ENCODE measurements at regions of chr12 and their contacts with region 1.

Region 1: GRCh38 chr12:94875525-94875924 is 128.0 kb downstream of the NDUFA12 start:
- DNase-seq: peak; percentile 65
- ATAC-seq: peak; percentile 68
- H3K4me3 ChIP-seq: no peak overlapping the region
- H3K27ac ChIP-seq: no peak overlapping the region
- H3K4me1 ChIP-seq: peaks cover 19 to 26% of the 10 kb centered on the region in 2 experiments; a peak in 3 of 4 replicates
- H3K27me3 ChIP-seq: no peaks in the 10 kb centered on the region
- CTCF ChIP-seq: peak; percentile 38 to 74 (median 68)
- POLR2A ChIP-seq: no peak
- RAD21 ChIP-seq: peak; percentile 89

Region 2: DNA sequence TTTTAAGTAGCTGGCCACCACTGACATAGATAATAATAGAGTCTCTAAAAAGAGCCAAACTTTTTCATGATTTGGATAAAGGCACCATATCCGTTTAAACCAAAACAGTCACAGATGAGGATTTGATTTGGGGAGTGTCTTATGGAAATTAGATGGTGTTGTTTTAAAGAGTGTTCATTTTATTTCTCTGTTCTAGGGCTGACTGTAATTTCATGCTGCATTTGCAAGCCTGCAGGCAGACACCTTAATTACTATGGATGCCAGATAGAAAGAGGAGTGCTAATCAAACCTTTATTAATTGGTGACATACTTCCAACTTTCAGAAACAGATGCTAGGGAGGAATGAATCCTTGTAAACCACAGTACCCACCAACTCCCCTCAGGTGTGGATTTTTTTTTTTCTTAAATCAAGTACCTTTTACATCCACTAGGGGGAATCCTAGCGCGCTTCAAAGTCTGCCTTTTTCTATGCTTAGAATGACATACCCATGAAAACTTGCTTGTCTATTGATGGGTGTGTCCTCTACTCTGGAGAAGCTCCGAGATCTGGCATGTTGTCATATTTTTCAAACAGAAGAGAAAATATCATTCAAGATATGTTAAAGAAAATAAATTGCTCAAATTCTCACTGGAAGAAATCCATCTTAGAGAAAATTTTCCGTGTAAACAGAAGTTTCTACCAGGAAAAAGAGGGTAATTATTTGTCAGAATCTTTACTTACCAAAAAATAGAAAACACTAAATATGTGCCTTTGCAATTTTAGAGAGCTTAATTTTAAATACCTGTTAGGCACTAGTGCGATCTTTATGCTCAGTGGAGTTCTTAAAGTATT is 741.3 kb before region 1 on chr12:
- CTCF ChIA-PET with region 1: no interaction called
- POLR2A ChIA-PET with region 1: no interaction called
- RAD21 ChIA-PET with region 1: no interaction called
- intact Hi-C with region 1: loop called (anchors 10 kb)
- DNase-seq: peak; percentile 61
- ATAC-seq: peak; percentile 83
- H3K4me3 ChIP-seq: no peak overlapping the region
- H3K27ac ChIP-seq: no peak overlapping the region
- H3K4me1 ChIP-seq: peaks cover 0 to 2% of the 10 kb centered on the region in 2 experiments; a peak in 1 of 4 replicates
- H3K27me3 ChIP-seq: no peaks in the 10 kb centered on the region; the same call in 1 of the 2 replicates
- CTCF ChIP-seq: peak; percentile 67 to 76 (median 68); a peak in 5 of 6 replicates
- POLR2A ChIP-seq: no peak
- RAD21 ChIP-seq: peak; percentile 73

Region 3: DNA sequence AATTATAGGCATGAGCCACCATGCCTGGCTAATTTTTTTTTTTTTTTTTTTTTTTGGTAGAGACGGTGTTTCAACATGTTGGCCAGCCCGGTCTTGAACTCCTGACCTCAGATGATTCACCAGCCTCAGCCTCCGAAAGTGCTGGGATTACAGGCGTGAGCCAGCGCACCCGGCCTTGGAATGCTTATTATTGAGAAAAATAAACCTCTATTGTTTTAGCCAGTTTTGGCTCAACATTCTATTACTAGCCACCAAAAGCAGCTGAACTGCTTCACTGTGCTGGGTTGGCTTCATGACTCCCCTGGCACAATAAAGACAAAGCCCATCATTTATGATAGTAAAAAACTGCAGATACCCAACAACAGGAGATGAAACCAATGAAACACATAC is 322.4 kb before region 1 on chr12:
- CTCF ChIA-PET with region 1: interaction called, 15 read pairs
- POLR2A ChIA-PET with region 1: no interaction called
- RAD21 ChIA-PET with region 1: interaction called in 1 of 2 experiments, 3 read pairs
- intact Hi-C with region 1: no loop called
- DNase-seq: peak; percentile 51
- ATAC-seq: peak; percentile 81
- H3K4me3 ChIP-seq: peak overlapping the region in 1 of 2 experiments; percentile 23; a peak in 2 of 4 replicates
- H3K27ac ChIP-seq: peak overlapping the region; percentile 11; the same call in 1 of the 2 replicates
- H3K4me1 ChIP-seq: peaks cover 11 to 29% of the 10 kb centered on the region in 2 experiments
- H3K27me3 ChIP-seq: no peaks in the 10 kb centered on the region
- CTCF ChIP-seq: no peak
- POLR2A ChIP-seq: no peak
- RAD21 ChIP-seq: peak; percentile 15; the same call in 1 of the 2 replicates

Region 4: DNA sequence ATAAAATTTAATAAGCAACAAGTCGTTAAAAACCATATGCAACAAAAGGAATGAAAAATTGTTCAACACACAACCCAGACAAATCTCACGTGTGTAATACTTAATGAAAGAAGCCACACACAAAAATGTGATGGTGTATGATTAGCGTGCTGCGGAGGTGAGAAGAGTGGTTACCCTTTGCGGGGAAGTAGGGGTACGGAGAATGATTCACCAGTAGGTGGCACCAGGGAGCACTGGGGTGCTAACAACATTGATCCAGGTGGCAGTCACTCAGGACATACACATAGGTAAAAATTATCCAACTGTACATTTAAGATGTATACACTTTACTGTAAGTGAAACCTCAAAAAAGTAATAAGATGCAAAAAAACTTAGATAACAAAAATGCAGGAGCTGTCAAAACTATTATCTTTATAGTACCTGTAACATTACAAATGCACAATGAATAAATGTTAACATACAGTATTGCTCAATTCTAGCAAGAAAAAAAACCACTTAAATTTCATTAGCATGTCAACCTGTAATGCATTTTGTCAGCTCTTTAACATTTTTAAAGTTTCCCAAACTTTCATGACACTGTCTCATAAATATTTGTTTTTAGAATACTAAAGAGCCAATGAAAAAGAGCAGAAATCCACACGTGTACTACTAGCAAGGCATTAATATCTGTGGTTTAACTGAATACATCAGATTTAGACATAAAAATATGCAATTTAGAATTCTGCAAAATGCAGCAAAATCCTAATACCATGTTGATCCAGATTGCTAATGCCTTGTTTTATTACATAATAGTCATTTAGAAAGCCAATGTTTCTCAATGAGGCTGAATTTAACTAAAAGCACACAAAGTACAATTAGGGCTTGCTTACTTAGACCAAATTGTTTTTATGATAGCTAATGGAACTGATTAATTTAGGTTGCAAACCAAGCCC is 271.8 kb before region 1 on chr12:
- CTCF ChIA-PET with region 1: interaction called, 4 read pairs
- POLR2A ChIA-PET with region 1: interaction called, 5 read pairs
- RAD21 ChIA-PET with region 1: no interaction called
- intact Hi-C with region 1: loop called (anchors 1 kb)
- DNase-seq: peak; percentile 22
- ATAC-seq: peak; percentile 91
- H3K4me3 ChIP-seq: no peak overlapping the region
- H3K27ac ChIP-seq: no peak overlapping the region
- H3K4me1 ChIP-seq: peaks cover 0 to 11% of the 10 kb centered on the region in 2 experiments; a peak in 1 of 4 replicates
- H3K27me3 ChIP-seq: no peaks in the 10 kb centered on the region
- CTCF ChIP-seq: peak; percentile 71 to 88 (median 87)
- POLR2A ChIP-seq: no peak
- RAD21 ChIP-seq: peak; percentile 67

Region 5: DNA sequence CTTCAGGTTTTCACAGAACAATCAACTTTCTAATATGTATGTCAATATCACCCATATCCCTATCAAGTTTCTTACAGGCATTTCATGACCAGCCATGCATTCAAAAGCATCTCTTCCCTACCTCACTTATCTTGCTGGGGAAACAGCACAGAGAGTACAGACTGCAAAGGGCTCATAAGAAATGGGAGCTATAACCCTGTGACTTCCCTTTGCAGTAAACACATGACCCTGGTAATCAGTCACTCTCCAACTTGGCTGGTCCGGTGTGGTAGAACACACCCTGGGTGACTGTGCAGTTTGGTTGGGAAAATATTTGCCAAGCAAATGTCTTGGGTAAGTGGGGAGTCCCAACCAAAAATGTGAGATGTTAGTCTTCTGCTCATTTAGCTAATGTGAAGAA is 175.7 kb before region 1 on chr12:
- CTCF ChIA-PET with region 1: no interaction called
- POLR2A ChIA-PET with region 1: no interaction called
- RAD21 ChIA-PET with region 1: no interaction called
- intact Hi-C with region 1: no loop called
- DNase-seq: no peak
- ATAC-seq: no peak
- H3K4me3 ChIP-seq: no peak overlapping the region
- H3K27ac ChIP-seq: no peak overlapping the region
- H3K4me1 ChIP-seq: no peaks in the 10 kb centered on the region
- H3K27me3 ChIP-seq: no peaks in the 10 kb centered on the region
- CTCF ChIP-seq: no peak
- POLR2A ChIP-seq: no peak
- RAD21 ChIP-seq: no peak

Region 6: GRCh38 chr12:94710933-94711332 is 164.6 kb before region 1 on chr12:
- CTCF ChIA-PET with region 1: interaction called, 10 read pairs
- POLR2A ChIA-PET with region 1: no interaction called
- RAD21 ChIA-PET with region 1: no interaction called
- intact Hi-C with region 1: loop called (anchors 5 kb)
- DNase-seq: peak; percentile 43
- ATAC-seq: peak; percentile 100
- H3K4me3 ChIP-seq: no peak overlapping the region
- H3K27ac ChIP-seq: no peak overlapping the region
- H3K4me1 ChIP-seq: no peaks in the 10 kb centered on the region
- H3K27me3 ChIP-seq: no peaks in the 10 kb centered on the region; the same call in none of the 2 replicates
- CTCF ChIP-seq: peak; percentile 46 to 78 (median 70); a peak in 5 of 6 replicates
- POLR2A ChIP-seq: no peak
- RAD21 ChIP-seq: peak; percentile 69

Region 7: GRCh38 chr12:95336390-95337067 is 461.0 kb after region 1 on chr12:
- CTCF ChIA-PET with region 1: interaction called, 6 read pairs
- POLR2A ChIA-PET with region 1: no interaction called
- RAD21 ChIA-PET with region 1: no interaction called
- intact Hi-C with region 1: loop called (anchors 5 kb)
- DNase-seq: peak; percentile 65
- ATAC-seq: peak; percentile 57
- H3K4me3 ChIP-seq: no peak overlapping the region
- H3K27ac ChIP-seq: no peak overlapping the region
- H3K4me1 ChIP-seq: peaks cover 16 to 59% of the 10 kb centered on the region in 2 experiments
- H3K27me3 ChIP-seq: no peaks in the 10 kb centered on the region
- CTCF ChIP-seq: peak; percentile 82 to 91 (median 83)
- POLR2A ChIP-seq: no peak
- RAD21 ChIP-seq: peak; percentile 97

Measured in HCT116 (cell line).